ENCODE measurements at regions of chr3 and their contacts with region 1.

Region 1: GRCh38 chr3:119891944-119892721 is 110.2 kb downstream of the NR1I2 start:
- DNase-seq: no peak
- H3K4me3 ChIP-seq: no peak overlapping the region
- H3K27ac ChIP-seq: no peak overlapping the region
- H3K4me1 ChIP-seq: peaks cover 12% of the 10 kb centered on the region
- H3K27me3 ChIP-seq: no peaks in the 10 kb centered on the region
- CTCF ChIP-seq: peak; percentile 76

Region 2: GRCh38 chr3:119990888-119991287 is 98.8 kb after region 1 on chr3:
- intact Hi-C with region 1: no loop called
- DNase-seq: no peak
- H3K4me3 ChIP-seq: no peak overlapping the region
- H3K27ac ChIP-seq: no peak overlapping the region
- H3K4me1 ChIP-seq: peaks cover 62% of the 10 kb centered on the region
- H3K27me3 ChIP-seq: no peaks in the 10 kb centered on the region
- CTCF ChIP-seq: no peak

Region 3: GRCh38 chr3:120094776-120095225 is 202.7 kb after region 1 on chr3:
- intact Hi-C with region 1: loop called (anchors 5 kb)
- DNase-seq: peak; percentile 97
- H3K4me3 ChIP-seq: peak overlapping the region; percentile 92
- H3K27ac ChIP-seq: peak overlapping the region; percentile 100
- H3K4me1 ChIP-seq: peaks cover 63% of the 10 kb centered on the region
- H3K27me3 ChIP-seq: no peaks in the 10 kb centered on the region
- CTCF ChIP-seq: no peak

Region 4: DNA sequence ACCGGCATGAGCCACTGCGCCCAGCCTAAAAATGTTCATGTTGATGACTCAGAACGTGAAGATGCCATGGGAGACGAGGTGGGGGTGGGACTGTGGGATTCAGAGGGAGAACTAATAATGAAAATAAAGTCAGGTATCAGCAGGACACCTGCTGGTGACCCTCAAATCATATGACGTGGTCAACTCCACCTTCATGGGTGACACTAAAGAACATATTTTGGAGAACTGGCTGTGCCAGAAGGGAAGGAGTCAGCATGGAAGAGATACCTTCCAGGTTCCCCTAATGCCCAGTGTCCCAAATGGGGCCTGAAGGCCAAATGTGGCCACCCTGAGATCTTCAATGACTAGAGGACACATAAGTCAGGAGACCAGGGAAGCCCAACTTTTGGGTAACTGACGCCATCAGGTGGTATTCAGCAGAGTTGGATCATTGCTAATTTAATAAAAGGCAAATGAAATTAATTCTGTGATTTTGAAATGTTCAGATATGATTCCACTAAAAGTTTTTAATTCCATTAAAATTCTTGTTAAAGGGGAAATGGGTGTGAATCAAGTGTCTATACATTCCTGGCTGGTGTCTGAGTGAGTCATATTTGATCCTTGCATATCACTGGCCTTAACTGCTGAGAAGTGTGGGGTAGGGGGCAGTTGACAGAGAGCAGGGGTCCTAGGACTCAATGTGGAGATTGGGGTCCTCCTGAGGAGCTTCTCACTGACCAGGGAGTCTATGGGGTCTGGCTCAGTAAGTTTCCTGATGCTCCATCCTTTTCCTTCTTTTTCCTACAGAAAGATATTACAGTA is 290.8 kb after region 1 on chr3:
- intact Hi-C with region 1: loop called (anchors 5 kb)
- DNase-seq: no peak
- H3K4me3 ChIP-seq: no peak overlapping the region
- H3K27ac ChIP-seq: no peak overlapping the region
- H3K4me1 ChIP-seq: peaks cover 1% of the 10 kb centered on the region
- H3K27me3 ChIP-seq: no peaks in the 10 kb centered on the region
- CTCF ChIP-seq: peak; percentile 59

Region 5: DNA sequence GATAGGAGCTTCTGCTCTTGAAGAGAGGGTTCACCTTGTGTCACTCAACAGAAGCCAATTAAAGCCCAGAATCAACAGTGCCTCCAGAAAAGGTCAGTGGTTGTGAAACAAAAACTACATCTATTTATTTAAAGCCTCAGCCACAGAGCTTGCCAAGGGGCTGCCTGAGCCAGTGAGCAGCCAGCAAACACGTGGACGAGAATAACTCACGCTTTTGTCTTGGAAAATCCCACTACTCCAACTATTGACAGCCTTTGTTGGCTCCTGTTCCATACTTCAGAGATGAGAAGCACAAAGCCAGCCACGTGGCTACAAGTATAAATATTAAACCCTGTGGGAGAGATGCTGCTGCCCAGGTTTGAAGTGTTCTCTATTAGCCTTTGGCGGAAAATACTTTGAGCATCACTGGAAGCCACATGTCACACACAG is 382.6 kb after region 1 on chr3:
- intact Hi-C with region 1: no loop called
- DNase-seq: peak; percentile 38
- H3K4me3 ChIP-seq: no peak overlapping the region
- H3K27ac ChIP-seq: no peak overlapping the region
- H3K4me1 ChIP-seq: peaks cover 6% of the 10 kb centered on the region
- H3K27me3 ChIP-seq: peaks cover 5% of the 10 kb centered on the region
- CTCF ChIP-seq: no peak